T-cell (primary cell): ENCODE measurements at regions of chr6 and their contacts with region 1.

Region 1: DNA sequence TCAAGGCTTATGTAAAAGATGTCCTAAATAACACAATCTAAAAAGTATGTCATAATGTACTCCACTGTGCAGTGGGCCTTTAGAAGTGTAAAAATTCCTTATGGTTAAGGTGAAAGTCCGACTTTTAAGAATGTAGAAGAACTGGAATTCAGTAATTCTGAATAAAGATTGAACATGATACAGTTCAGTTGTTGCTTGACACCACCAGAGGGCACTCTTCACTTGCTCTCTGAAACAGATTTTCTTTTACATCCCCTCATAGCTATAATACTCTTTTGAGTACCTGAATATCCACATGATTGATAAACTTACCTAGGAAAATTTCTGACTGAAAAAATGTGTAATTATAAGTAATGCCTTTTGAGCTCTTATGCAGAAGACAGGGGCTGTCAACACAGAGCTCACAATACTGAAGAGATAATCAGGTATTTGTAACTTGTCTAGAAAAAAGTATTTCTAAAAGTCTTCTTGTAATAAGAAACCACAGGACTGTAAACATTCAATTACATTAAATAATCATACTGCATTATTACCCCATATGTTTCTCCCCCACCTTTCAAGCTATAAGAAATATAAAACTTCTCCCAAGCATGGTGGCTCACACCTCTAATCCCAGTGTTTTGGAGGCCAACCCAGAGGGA is 92.1 kb downstream of the POPDC3 start:
- DNase-seq: peak in 20 of 35 experiments; percentile 3 to 73 (median 10)
- ATAC-seq: peak in 2 of 4 experiments; percentile 54 to 63
- H3K4me3 ChIP-seq: no peak overlapping the region
- H3K4me3 Mint-ChIP-seq: no peak overlapping the region
- H3K27ac ChIP-seq: no peak overlapping the region
- H3K27ac Mint-ChIP-seq: no peak overlapping the region
- H3K4me1 ChIP-seq: no peaks in the 10 kb centered on the region
- H3K4me1 Mint-ChIP-seq: no peaks in the 10 kb centered on the region
- H3K27me3 ChIP-seq: no peaks in the 10 kb centered on the region
- H3K27me3 Mint-ChIP-seq: no peaks in the 10 kb centered on the region

Region 2: GRCh38 chr6:104881964-104882668 is 205.6 kb before region 1 on chr6:
- CTCF ChIA-PET with region 1: no interaction called
- POLR2A ChIA-PET with region 1: no interaction called
- DNase-seq: no peak
- ATAC-seq: no peak
- H3K4me3 ChIP-seq: no peak overlapping the region
- H3K4me3 Mint-ChIP-seq: no peak overlapping the region
- H3K27ac ChIP-seq: no peak overlapping the region
- H3K27ac Mint-ChIP-seq: no peak overlapping the region
- H3K4me1 ChIP-seq: no peaks in the 10 kb centered on the region
- H3K4me1 Mint-ChIP-seq: no peaks in the 10 kb centered on the region
- H3K27me3 ChIP-seq: peaks cover 0 to 14% of the 10 kb centered on the region in 2 experiments
- H3K27me3 Mint-ChIP-seq: peaks cover 9 to 13% of the 10 kb centered on the region in 2 donors

Region 3: GRCh38 chr6:105139033-105139432 is 51.3 kb after region 1 on chr6:
- CTCF ChIA-PET with region 1: interaction called in 1 of 2 experiments, 10 read pairs
- POLR2A ChIA-PET with region 1: no interaction called
- DNase-seq: no peak
- ATAC-seq: no peak
- H3K4me3 ChIP-seq: no peak overlapping the region
- H3K4me3 Mint-ChIP-seq: no peak overlapping the region
- H3K27ac ChIP-seq: no peak overlapping the region
- H3K27ac Mint-ChIP-seq: no peak overlapping the region
- H3K4me1 ChIP-seq: peaks cover 0 to 15% of the 10 kb centered on the region in 2 experiments
- H3K4me1 Mint-ChIP-seq: peaks cover 10 to 16% (median 14%) of the 10 kb centered on the region in 3 donors
- H3K27me3 ChIP-seq: peaks cover 23 to 24% of the 10 kb centered on the region in 2 experiments
- H3K27me3 Mint-ChIP-seq: peaks cover 46 to 67% of the 10 kb centered on the region in 2 donors

Region 4: GRCh38 chr6:105402939-105403935 is 315.5 kb after region 1 on chr6 and contains the start of gene PREP:
- CTCF ChIA-PET with region 1: interaction called, 4 to 15 read pairs
- POLR2A ChIA-PET with region 1: no interaction called
- DNase-seq: peak; percentile 61 to 89 (median 76)
- ATAC-seq: peak; percentile 94 to 98 (median 96)
- H3K4me3 ChIP-seq: peak within 1 kb of the TSS; percentile 89 to 90
- H3K4me3 Mint-ChIP-seq: peak within 1 kb of the TSS; percentile 82 to 90 (median 88)
- H3K27ac ChIP-seq: peak within 1 kb of the TSS; percentile 22
- H3K27ac Mint-ChIP-seq: peak within 1 kb of the TSS; percentile 68 to 69
- H3K4me1 ChIP-seq: peaks cover 32 to 37% of the 10 kb centered on the region in 2 experiments
- H3K4me1 Mint-ChIP-seq: peaks cover 49 to 56% (median 51%) of the 10 kb centered on the region in 3 donors
- H3K27me3 ChIP-seq: peaks cover 3 to 4% of the 10 kb centered on the region in 2 experiments
- H3K27me3 Mint-ChIP-seq: peaks cover 9 to 12% of the 10 kb centered on the region in 2 donors
- total RNA-seq, gene PREP: 27.4 to 34.0 (median 30.7) TPM

Region 5: DNA sequence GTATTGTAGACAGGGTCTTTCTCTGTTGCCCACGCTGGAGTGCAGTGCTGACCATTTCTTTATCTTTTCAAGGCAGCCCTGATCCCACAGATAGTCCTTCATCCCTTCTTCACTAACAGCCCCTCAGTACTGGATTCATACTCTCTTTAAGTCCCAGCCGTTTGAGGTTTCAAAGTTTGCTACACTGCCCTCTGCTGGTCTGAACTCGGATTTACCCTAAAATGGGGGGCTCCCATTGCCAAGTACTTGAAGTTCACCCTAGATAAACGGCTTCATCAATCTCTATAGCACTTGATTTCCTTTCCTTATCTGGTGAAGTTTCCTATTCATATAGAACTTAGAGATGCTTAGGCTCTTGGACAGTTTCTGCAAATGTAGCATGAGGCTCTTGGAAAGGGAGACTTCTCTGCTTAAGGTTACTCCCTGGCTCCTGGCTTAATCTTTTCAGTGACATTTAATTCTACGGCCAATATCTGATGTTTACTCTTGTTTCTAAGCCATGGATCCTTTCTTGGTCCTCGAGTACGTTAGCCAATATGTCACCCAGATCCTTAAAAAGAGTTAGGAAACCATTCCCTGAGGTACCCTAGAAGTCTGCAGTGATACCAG is 336.6 kb after region 1 on chr6:
- CTCF ChIA-PET with region 1: interaction called, 13 to 26 read pairs
- POLR2A ChIA-PET with region 1: no interaction called
- DNase-seq: peak in 34 of 35 experiments; percentile 15 to 79 (median 48)
- ATAC-seq: peak; percentile 53 to 71 (median 69)
- H3K4me3 ChIP-seq: no peak overlapping the region
- H3K4me3 Mint-ChIP-seq: no peak overlapping the region
- H3K27ac ChIP-seq: no peak overlapping the region
- H3K27ac Mint-ChIP-seq: no peak overlapping the region
- H3K4me1 ChIP-seq: no peaks in the 10 kb centered on the region
- H3K4me1 Mint-ChIP-seq: peaks cover 0 to 2% (median 0%) of the 10 kb centered on the region in 3 donors
- H3K27me3 ChIP-seq: no peaks in the 10 kb centered on the region
- H3K27me3 Mint-ChIP-seq: peaks cover 2 to 7% of the 10 kb centered on the region in 2 donors

Region 6: GRCh38 chr6:106579281-106579680 is 1491.6 kb after region 1 on chr6:
- CTCF ChIA-PET with region 1: no interaction called
- POLR2A ChIA-PET with region 1: no interaction called
- DNase-seq: no peak
- ATAC-seq: no peak
- H3K4me3 ChIP-seq: no peak overlapping the region
- H3K4me3 Mint-ChIP-seq: no peak overlapping the region
- H3K27ac ChIP-seq: no peak overlapping the region
- H3K27ac Mint-ChIP-seq: no peak overlapping the region
- H3K4me1 ChIP-seq: no peaks in the 10 kb centered on the region
- H3K4me1 Mint-ChIP-seq: no peaks in the 10 kb centered on the region
- H3K27me3 ChIP-seq: no peaks in the 10 kb centered on the region
- H3K27me3 Mint-ChIP-seq: no peaks in the 10 kb centered on the region